Calu3 (cell line): ENCODE measurements at regions of chr15 and their contacts with region 1.

Region 1: DNA sequence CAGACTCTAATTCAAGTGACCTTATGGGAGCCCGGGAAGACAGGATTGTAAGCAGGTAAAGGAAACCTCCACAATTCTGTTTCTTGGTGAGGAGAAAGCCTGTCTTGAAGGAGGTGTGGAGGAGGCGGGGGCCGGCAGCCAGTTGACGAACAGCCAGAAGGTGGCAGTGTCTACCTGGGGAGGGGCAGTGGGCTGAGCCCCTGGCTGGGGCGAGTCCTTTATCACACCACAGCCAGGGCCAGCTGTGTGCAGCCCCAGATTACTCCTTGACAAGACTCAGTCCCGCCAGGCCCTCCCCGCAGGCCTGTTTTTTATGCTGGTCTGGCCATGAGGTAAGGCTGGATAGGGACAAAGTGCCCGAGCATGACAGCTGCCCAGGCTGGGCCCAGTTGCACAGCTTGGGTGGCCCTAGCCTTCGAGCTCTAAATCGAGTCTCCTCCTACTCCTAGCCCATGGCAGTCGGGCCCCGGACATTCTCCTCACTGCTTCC is 40.9 kb upstream of the IDH2 start:
- DNase-seq: peak; percentile 91
- H3K4me3 Mint-ChIP-seq: no peak overlapping the region
- H3K27ac Mint-ChIP-seq: no peak overlapping the region
- H3K4me1 Mint-ChIP-seq: no peaks in the 10 kb centered on the region
- H3K27me3 Mint-ChIP-seq: no peaks in the 10 kb centered on the region
- CTCF ChIP-seq: peak; percentile 95

Region 2: GRCh38 chr15:90114451-90114901 is 28.7 kb before region 1 on chr15:
- CTCF ChIA-PET with region 1: no interaction called
- intact Hi-C with region 1: no loop called
- DNase-seq: no peak
- H3K4me3 Mint-ChIP-seq: no peak overlapping the region
- H3K27ac Mint-ChIP-seq: no peak overlapping the region
- H3K4me1 Mint-ChIP-seq: peaks cover 7% of the 10 kb centered on the region
- H3K27me3 Mint-ChIP-seq: no peaks in the 10 kb centered on the region
- CTCF ChIP-seq: no peak

Region 3: DNA sequence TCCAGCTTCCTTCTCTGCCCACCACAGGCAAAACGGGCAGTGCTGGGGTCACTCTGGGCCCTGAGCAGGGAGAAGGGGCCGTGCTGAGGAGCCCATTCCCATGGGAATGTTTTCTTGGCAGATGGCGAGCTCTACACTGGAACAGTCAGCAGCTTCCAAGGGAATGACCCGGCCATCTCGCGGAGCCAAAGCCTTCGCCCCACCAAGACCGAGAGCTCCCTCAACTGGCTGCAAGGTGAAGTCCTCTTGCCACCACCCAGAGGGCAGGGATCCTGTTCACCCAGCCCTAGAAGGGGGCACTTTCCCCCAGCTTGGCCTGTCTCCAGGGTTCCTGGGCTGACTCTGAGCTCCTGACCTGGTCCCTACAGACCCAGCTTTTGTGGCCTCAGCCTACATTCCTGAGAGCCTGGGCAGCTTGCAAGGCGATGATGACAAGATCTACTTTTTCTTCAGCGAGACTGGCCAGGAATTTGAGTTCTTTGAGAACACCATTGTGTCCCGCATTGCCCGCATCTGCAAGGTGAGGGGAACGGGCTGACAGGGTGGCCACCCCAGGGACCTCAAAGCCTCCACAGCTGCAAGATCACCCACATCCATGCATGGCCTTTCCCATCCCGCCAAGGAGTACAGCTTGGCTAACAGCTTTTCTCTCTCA is 78.2 kb after region 1 on chr15:
- CTCF ChIA-PET with region 1: interaction called, 17 read pairs
- intact Hi-C with region 1: no loop called
- DNase-seq: peak; percentile 85
- H3K4me3 Mint-ChIP-seq: no peak overlapping the region
- H3K27ac Mint-ChIP-seq: no peak overlapping the region
- H3K4me1 Mint-ChIP-seq: peaks cover 18% of the 10 kb centered on the region
- H3K27me3 Mint-ChIP-seq: no peaks in the 10 kb centered on the region
- CTCF ChIP-seq: peak; percentile 74

Region 4: DNA sequence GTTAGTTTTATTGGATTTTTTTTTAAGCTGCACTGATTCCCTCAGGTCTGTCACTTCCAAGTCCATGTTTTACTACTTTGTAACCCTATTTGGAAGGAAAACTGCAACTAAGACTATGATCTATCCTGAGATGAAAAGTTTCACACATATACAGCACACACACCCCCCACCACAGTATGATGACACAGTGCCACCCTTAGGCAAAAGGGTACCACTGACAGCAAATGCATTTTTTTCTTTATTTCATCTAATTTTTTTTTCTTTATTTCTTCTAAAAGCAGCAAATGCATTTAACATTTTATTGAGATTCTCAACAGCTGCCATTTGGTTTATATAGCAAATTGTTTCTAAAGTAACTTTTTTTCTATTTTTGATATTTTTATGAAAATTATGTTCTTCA is 143.5 kb after region 1 on chr15:
- CTCF ChIA-PET with region 1: interaction called, 4 read pairs
- intact Hi-C with region 1: loop called (anchors 1 kb)
- DNase-seq: peak; percentile 30
- H3K4me3 Mint-ChIP-seq: no peak overlapping the region
- H3K27ac Mint-ChIP-seq: no peak overlapping the region
- H3K4me1 Mint-ChIP-seq: no peaks in the 10 kb centered on the region
- H3K27me3 Mint-ChIP-seq: no peaks in the 10 kb centered on the region
- CTCF ChIP-seq: peak; percentile 24